Activated T-helper 1 cell treated with anti-CD3 and anti-CD28 coated beads, Interleukin-12 subunit alpha, Interleukin-12 subunit beta, Interleukin-2, Interleukin-4 antibody, amounts not matched to agents 30 ng/mL and 10 ng/mL and 1 ng/mL, durations not matched to agents 14 hours and 24 hours and 36 hours (primary cell): ENCODE measurements at regions of chr10 and their contacts with region 1.

Region 1: GRCh38 chr10:71893920-71894319 is 42.9 kb upstream of the PSAP start:
- DNase-seq: no peak
- H3K4me3 Mint-ChIP-seq: no peak overlapping the region
- H3K27ac Mint-ChIP-seq: no peak overlapping the region
- H3K4me1 Mint-ChIP-seq: peaks cover 10% of the 10 kb centered on the region
- H3K27me3 Mint-ChIP-seq: peaks cover 7% of the 10 kb centered on the region

Region 2: GRCh38 chr10:71319042-71319799 is 574.7 kb before region 1 on chr10 and contains the start of gene SLC29A3:
- intact Hi-C with region 1: loop called (anchors 1 kb)
- DNase-seq: peak; percentile 81
- H3K4me3 Mint-ChIP-seq: peak within 1 kb of the TSS; percentile 96
- H3K27ac Mint-ChIP-seq: peak within 1 kb of the TSS; percentile 83
- H3K4me1 Mint-ChIP-seq: peaks cover 23% of the 10 kb centered on the region
- H3K27me3 Mint-ChIP-seq: peaks cover 1% of the 10 kb centered on the region
- total RNA-seq, gene SLC29A3: 6.6 and 6.8 TPM in 2 replicates

Region 3: DNA sequence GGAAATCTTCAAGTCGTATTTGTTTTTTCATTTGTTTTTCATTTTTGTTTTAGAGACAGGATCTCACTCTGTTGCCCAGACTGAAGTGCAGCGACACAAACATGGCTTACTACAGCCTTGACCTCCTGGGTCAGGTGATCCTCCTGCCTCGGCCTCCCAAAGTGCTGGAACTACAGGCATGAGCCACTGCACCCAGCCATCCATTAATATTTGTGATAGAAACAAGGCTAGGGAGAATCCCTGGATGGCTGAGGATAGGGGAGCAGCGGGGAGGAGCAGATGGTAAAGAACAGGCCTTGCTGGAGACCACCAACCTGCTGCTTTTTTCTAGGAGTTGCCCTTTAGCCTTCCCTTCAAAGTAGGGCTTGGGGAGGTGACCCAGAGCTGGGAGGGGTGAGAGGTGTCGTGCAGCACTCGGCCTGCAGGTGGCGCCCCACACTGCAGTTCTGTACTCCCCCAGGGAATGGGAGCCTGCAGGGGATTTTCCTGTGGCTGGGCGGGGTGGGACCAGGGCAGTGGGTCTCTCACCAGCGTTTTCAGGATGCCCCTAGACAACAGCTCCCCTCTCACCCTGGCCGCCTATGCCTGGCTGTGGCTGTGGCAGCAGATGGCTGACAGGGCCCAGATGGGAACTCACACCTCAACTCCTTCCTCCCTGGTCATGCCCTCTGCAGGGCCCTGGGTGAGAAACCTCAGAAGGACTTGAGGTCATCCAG is 509.8 kb before region 1 on chr10:
- intact Hi-C with region 1: loop called (anchors 1 kb)
- DNase-seq: peak; percentile 57
- H3K4me3 Mint-ChIP-seq: no peak overlapping the region
- H3K27ac Mint-ChIP-seq: no peak overlapping the region
- H3K4me1 Mint-ChIP-seq: no peaks in the 10 kb centered on the region
- H3K27me3 Mint-ChIP-seq: peaks cover 20% of the 10 kb centered on the region

Region 4: GRCh38 chr10:71835671-71836595 is 58.0 kb before region 1 on chr10:
- intact Hi-C with region 1: no loop called
- DNase-seq: no peak
- H3K4me3 Mint-ChIP-seq: no peak overlapping the region
- H3K27ac Mint-ChIP-seq: no peak overlapping the region
- H3K4me1 Mint-ChIP-seq: peaks cover 47% of the 10 kb centered on the region
- H3K27me3 Mint-ChIP-seq: no peaks in the 10 kb centered on the region

Region 5: DNA sequence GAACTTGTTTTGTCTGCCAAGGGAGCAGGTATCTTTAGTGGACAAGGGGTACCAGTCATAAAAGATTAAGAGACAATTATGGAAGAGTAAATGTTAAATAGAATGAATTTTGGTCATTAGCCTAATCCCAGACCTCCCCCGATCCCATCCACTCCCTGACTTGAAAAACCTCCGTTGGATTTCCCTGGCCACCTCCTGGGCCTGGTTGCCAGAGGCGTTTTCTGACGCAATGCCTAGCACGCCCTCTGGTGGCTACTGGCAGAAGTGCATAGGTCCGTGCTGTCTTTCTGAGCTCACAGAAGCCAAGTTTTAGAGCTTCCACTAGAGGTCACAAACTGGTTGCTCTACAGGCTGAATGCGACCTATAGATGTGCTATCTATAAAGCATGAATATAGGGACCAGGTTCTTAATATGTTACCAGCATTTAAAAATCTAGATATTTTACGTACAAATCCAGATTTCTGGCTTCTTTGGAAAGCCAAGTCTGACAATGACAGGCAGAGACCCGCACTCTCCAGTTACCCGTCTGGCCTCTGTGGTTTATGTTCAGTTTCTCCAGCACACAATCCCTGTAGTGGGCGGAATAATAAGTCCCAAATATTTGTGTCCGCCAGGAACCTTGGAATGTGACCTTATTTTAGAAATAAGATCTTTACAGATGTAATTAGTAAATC is 154.7 kb after region 1 on chr10:
- intact Hi-C with region 1: loop called (anchors 1 kb)
- DNase-seq: peak; percentile 75
- H3K4me3 Mint-ChIP-seq: no peak overlapping the region
- H3K27ac Mint-ChIP-seq: peak overlapping the region; percentile 0
- H3K4me1 Mint-ChIP-seq: peaks cover 12% of the 10 kb centered on the region
- H3K27me3 Mint-ChIP-seq: peaks cover 3% of the 10 kb centered on the region

Region 6: DNA sequence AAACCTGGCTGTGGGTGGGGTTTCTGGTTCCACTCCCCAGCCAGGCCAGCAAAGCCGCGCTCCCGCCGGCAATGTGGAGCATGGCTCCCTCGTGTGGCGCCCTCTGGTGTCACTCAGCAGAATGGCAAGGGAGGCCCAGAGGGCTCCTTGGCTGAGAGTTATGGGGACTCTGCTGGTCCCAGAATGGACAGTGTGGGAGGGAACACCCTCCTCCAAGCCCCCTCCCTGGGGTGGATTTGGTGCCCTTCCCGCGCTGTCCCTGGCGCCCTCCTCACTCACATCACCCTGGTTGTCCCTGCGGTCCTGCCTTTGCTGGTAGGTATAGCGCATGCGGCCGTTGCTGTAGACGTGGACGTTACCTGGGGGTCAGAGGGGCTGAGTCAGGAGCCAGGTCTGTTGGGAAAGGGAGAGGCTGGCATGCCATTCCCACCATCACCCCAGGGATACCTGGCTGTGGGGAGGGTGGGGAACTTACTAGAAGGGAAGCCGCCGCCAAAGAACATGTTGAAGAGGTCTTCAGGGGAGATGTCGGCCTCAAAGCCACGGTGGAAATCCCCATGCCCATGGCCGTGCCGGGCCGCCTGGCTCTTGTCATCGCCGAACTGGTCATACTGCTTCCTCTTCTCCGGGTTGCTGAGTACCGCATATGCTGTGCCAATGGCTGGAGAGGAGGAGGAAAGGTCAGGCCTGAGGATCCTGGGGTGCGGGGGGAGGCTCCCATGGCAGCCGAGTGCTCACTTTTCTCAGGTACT is 446.8 kb after region 1 on chr10:
- intact Hi-C with region 1: loop called (anchors 1 kb)
- DNase-seq: peak; percentile 75
- H3K4me3 Mint-ChIP-seq: no peak overlapping the region
- H3K27ac Mint-ChIP-seq: no peak overlapping the region
- H3K4me1 Mint-ChIP-seq: peaks cover 40% of the 10 kb centered on the region
- H3K27me3 Mint-ChIP-seq: no peaks in the 10 kb centered on the region